ENCODE measurements at regions of chr11 and their contacts with region 1.

Region 1: GRCh38 chr11:100980156-100980555 is 149.5 kb downstream of the PGR start:
- DNase-seq: no peak
- ATAC-seq: no peak
- H3K4me3 ChIP-seq: no peak overlapping the region
- H3K27ac ChIP-seq: no peak overlapping the region
- H3K4me1 ChIP-seq: no peaks in the 10 kb centered on the region
- H3K27me3 ChIP-seq: no peaks in the 10 kb centered on the region

Region 2: GRCh38 chr11:100734743-100735527 is 245.2 kb before region 1 on chr11:
- intact Hi-C with region 1: no loop called
- DNase-seq: no peak
- ATAC-seq: no peak
- H3K4me3 ChIP-seq: no peak overlapping the region
- H3K27ac ChIP-seq: no peak overlapping the region
- H3K4me1 ChIP-seq: no peaks in the 10 kb centered on the region
- H3K27me3 ChIP-seq: no peaks in the 10 kb centered on the region

Region 3: GRCh38 chr11:101019870-101020269 is 39.7 kb after region 1 on chr11:
- intact Hi-C with region 1: no loop called
- DNase-seq: no peak
- ATAC-seq: no peak
- H3K4me3 ChIP-seq: no peak overlapping the region
- H3K27ac ChIP-seq: no peak overlapping the region
- H3K4me1 ChIP-seq: no peaks in the 10 kb centered on the region
- H3K27me3 ChIP-seq: no peaks in the 10 kb centered on the region

Region 4: DNA sequence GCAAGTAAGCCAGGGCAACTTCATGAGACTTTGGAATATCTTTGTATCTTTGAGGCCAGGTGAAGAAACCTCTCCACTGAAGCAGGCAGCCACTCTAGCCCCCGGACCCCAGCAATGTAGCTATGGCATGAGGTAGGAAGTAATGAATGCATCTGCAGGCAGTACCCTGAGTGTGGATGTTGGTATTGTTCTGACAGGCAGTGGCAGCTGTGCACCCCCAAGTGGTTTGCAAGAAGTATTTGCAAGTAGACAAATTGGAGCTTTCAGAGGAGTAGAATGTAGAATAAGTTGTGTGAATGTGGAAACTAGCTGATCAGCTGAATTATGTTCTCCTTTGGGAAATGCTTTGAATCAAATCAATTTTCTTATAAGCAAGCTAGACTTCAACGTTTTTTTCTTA is 343.8 kb after region 1 on chr11:
- intact Hi-C with region 1: loop called in 1 of 4 experiments (anchors 10 kb)
- DNase-seq: no peak
- ATAC-seq: no peak
- H3K4me3 ChIP-seq: no peak overlapping the region
- H3K27ac ChIP-seq: no peak overlapping the region
- H3K4me1 ChIP-seq: no peaks in the 10 kb centered on the region
- H3K27me3 ChIP-seq: no peaks in the 10 kb centered on the region

Region 5: DNA sequence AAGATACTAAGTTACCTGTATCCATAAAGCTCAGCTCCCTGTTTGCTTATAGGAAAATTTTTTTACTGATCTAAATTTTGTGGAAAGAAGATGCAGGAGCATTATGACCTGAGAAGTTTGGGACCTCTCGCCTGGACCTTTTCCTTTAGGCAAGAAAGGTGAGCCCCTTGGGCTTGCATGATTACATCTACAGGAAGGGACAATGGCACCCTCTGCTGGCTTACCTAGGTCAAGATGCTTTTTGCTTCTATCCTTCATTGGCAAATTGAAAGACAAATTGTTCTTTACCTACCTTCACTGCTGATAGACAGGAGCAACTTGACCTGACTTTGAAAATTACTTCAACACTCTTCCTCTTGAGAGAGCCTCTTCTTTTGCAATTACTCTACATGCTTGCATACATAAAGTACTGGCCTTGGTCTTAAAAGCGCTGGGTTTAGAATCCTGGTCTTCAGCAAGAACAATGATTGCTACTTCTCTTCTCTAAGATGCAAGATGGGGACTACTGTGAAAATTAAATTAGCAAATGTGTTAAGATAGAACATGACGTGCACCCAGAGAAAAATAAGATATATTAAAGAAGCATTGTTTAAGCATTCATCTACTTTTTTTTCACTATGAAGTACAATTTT is 456.5 kb after region 1 on chr11:
- intact Hi-C with region 1: loop called in 3 of 4 experiments (anchors 5 to 10 kb)
- DNase-seq: peak in 2 of 3 donors; percentile 20 to 30
- ATAC-seq: no peak
- H3K4me3 ChIP-seq: no peak overlapping the region
- H3K27ac ChIP-seq: no peak overlapping the region
- H3K4me1 ChIP-seq: peaks cover 2% of the 10 kb centered on the region
- H3K27me3 ChIP-seq: no peaks in the 10 kb centered on the region

Measured in right cardiac atrium (tissue), 5 donors.